CD8-positive, alpha-beta T cell (primary cell): ENCODE measurements at regions of chr10 and their contacts with region 1.

Region 1: DNA sequence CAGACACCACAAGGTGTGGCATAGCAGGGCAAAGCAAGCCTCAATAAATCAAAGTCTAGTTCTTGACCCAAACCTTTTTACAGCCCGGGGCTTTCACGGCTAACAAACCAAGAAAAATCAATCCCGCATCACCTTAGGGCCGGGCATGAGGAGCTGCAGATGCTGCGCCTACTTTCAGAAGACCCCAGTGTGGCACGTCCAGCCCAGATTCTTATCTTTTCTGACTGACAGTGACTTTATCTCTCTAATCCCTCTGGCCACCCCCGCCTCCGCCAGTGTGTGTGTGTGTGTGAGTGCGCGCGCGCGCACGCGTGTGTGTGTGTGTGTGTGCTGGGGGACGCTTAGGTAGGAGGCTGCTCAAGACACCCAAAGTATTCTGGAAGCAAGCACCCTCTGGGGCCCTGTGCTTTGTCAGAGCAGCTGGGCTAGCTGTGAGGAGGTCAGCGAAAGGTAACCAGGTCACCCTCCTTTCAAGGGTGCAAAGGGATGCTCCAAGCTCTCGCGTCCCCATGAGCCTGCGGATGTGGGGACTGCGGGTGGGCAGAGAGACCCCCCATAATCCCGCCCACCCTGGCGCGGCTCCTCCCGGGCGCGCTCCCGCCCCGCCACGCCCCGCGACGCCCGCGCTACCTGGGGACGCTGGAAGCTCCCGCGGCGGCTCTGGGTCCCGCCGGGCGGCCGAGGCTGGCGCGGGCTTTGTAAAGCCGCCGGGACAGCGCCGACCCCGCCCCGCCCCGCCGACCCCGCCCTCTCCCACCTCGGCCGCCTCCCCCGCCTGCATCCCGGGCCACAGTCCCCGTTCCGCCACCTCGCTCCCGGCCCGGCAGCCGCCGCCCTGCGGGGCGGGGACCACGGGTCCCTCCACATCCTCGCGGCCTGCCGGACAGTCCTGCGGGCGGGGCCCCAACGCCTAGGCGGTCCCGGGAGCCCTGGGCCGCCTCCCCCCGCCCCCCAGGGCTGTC is 57.1 kb upstream of the RHOBTB1 start:
- DNase-seq: no peak
- ATAC-seq: no peak
- H3K4me3 ChIP-seq: no peak overlapping the region
- H3K4me3 Mint-ChIP-seq: peak overlapping the region; percentile 23
- H3K27ac ChIP-seq: no peak overlapping the region
- H3K27ac Mint-ChIP-seq: no peak overlapping the region
- H3K4me1 ChIP-seq: no peaks in the 10 kb centered on the region
- H3K4me1 Mint-ChIP-seq: peaks cover 5% of the 10 kb centered on the region
- H3K27me3 ChIP-seq: no peaks in the 10 kb centered on the region
- H3K27me3 Mint-ChIP-seq: peaks cover 42% of the 10 kb centered on the region
- CTCF ChIP-seq: no peak

Region 2: GRCh38 chr10:60955957-60956425 is 45.1 kb before region 1 on chr10:
- CTCF ChIA-PET with region 1: no interaction called
- POLR2A ChIA-PET with region 1: no interaction called
- intact Hi-C with region 1: loop called in 1 of 2 experiments (anchors 1 kb)
- DNase-seq: no peak
- ATAC-seq: no peak
- H3K4me3 ChIP-seq: no peak overlapping the region
- H3K4me3 Mint-ChIP-seq: no peak overlapping the region
- H3K27ac ChIP-seq: no peak overlapping the region
- H3K27ac Mint-ChIP-seq: no peak overlapping the region
- H3K4me1 ChIP-seq: no peaks in the 10 kb centered on the region
- H3K4me1 Mint-ChIP-seq: no peaks in the 10 kb centered on the region
- H3K27me3 ChIP-seq: no peaks in the 10 kb centered on the region
- H3K27me3 Mint-ChIP-seq: no peaks in the 10 kb centered on the region
- CTCF ChIP-seq: no peak

Region 3: DNA sequence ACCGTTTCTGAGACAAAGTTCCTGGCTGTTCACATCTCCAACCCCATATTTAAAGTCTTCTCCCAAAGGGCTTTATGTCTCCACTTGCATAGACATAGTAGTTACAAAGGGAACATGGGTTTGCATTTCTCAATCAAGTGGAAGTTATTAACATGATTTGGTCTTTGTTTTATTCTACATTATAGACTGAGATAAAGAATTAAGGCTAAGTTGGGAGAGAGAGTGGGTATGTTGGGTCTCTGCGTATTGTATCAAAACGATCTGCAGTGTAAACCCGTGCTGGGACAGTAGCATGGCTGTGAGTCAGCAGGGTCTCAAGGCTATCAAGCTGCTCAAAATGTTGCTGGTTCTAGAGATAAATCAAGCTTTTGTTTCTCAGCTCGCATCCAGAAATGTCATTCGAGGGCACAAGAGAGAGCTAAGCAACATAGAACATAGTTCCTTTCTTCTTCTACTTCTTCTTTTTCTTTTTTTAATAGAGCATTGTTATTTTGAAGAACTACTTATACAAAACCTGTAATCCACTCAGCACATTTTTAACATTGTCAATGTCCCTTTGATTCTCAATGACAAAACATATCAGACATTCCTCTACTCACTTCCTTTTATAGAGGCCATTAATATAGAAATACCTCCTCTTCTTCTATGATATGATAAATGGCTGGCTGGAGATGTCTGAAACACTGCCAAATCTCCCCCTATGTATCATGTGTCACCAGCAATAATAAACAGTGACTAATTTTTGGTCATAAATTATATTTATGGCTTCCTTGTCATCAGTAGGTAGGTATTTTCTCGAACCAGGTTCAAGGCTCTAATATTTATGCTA is 22.5 kb before region 1 on chr10:
- CTCF ChIA-PET with region 1: no interaction called
- POLR2A ChIA-PET with region 1: no interaction called
- intact Hi-C with region 1: no loop called
- DNase-seq: no peak
- ATAC-seq: no peak
- H3K4me3 ChIP-seq: no peak overlapping the region
- H3K4me3 Mint-ChIP-seq: no peak overlapping the region
- H3K27ac ChIP-seq: no peak overlapping the region
- H3K27ac Mint-ChIP-seq: no peak overlapping the region
- H3K4me1 ChIP-seq: no peaks in the 10 kb centered on the region
- H3K4me1 Mint-ChIP-seq: no peaks in the 10 kb centered on the region
- H3K27me3 ChIP-seq: no peaks in the 10 kb centered on the region
- H3K27me3 Mint-ChIP-seq: peaks cover 1% of the 10 kb centered on the region
- CTCF ChIP-seq: no peak